MCF 10A (cell line): ENCODE measurements at regions of chr12 and their contacts with region 1.

Region 1: GRCh38 chr12:100688451-100688864 is 106.1 kb upstream of the ANO4 start:
- DNase-seq: peak; percentile 33
- H3K4me3 Mint-ChIP-seq: no peak overlapping the region
- H3K27ac Mint-ChIP-seq: no peak overlapping the region
- H3K4me1 Mint-ChIP-seq: peaks cover 6% of the 10 kb centered on the region
- H3K27me3 Mint-ChIP-seq: no peaks in the 10 kb centered on the region
- CTCF ChIP-seq: no peak

Region 2: DNA sequence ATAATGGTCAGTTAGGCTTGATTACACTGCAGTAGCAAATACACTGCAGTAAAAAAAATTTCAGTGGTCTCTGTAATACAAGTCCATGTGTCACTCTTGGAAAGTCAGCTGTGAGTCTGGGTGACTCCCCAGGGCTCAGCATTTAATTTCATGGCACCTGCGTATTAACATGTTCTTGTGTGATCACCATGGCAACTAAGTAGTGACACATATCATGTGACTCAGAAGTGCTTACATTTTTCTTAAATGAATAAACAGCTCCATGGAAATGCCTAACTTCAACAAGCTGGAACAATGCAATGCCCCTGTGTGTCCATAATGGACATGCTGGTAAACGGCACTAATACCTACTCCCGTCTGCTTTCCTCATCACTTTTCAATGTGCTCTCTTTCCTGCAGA is 17.6 kb after region 1 on chr12:
- CTCF ChIA-PET with region 1: interaction called, 5 read pairs
- POLR2A ChIA-PET with region 1: interaction called, 10 read pairs
- intact Hi-C with region 1: no loop called
- DNase-seq: peak; percentile 65
- H3K4me3 Mint-ChIP-seq: no peak overlapping the region
- H3K27ac Mint-ChIP-seq: peak overlapping the region; percentile 85
- H3K4me1 Mint-ChIP-seq: peaks cover 12% of the 10 kb centered on the region
- H3K27me3 Mint-ChIP-seq: no peaks in the 10 kb centered on the region
- CTCF ChIP-seq: no peak